ENCODE measurements at regions of chr13 and their contacts with region 1.

Region 1: DNA sequence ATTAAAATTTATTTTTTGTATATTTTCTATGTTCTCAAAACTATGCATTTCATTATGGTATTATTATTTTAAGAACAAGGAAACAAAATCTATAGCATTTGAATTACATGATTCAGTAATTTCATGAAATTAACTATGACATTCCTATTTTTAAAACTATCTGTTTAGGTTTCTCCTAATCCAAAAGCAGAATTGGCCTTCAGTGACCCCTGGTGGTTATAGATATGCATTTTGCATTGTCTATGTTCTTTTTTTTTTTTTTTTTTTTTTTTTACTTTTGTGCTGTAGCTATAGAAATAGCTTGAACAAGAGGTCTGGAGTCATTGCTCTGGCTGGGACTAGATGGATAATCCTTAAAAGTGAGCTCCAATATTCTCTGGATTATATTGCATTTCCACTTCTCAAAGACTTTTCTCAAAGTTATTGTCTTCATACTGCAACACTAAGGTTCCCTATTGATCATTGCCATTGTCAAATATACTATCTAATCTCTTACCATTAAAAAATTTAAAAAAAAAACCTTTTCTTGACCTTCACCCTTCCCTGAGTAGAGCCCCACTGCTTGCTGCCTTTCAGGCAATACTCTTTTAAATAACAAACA is 15.9 kb upstream of the DNAJC3 start:
- DNase-seq: peak in 1 of 5 donors; percentile 16
- ATAC-seq: no peak
- H3K4me3 ChIP-seq: no peak overlapping the region
- H3K27ac ChIP-seq: no peak overlapping the region
- H3K4me1 ChIP-seq: no peaks in the 10 kb centered on the region
- H3K27me3 ChIP-seq: peaks cover 0 to 7% (median 0%) of the 10 kb centered on the region in 9 donors
- CTCF ChIP-seq: peak; percentile 39 to 67 (median 52)
- POLR2A ChIP-seq: no peak

Region 2: GRCh38 chr13:95181586-95181985 is 479.5 kb before region 1 on chr13:
- intact Hi-C with region 1: loop called in 1 of 10 experiments (anchors 5 kb)
- DNase-seq: no peak
- ATAC-seq: no peak
- H3K4me3 ChIP-seq: no peak overlapping the region
- H3K27ac ChIP-seq: no peak overlapping the region
- H3K4me1 ChIP-seq: peaks cover 0 to 18% (median 8%) of the 10 kb centered on the region in 12 donors
- H3K27me3 ChIP-seq: no peaks in the 10 kb centered on the region
- CTCF ChIP-seq: no peak
- POLR2A ChIP-seq: no peak

Region 3: GRCh38 chr13:95509521-95510310 is 151.4 kb before region 1 on chr13:
- intact Hi-C with region 1: loop called in 1 of 10 experiments (anchors 10 kb)
- DNase-seq: no peak
- ATAC-seq: no peak
- H3K4me3 ChIP-seq: no peak overlapping the region
- H3K27ac ChIP-seq: no peak overlapping the region
- H3K4me1 ChIP-seq: peaks cover 0 to 8% (median 0%) of the 10 kb centered on the region in 12 donors
- H3K27me3 ChIP-seq: peaks cover 0 to 6% (median 0%) of the 10 kb centered on the region in 9 donors
- CTCF ChIP-seq: no peak
- POLR2A ChIP-seq: no peak

Region 4: DNA sequence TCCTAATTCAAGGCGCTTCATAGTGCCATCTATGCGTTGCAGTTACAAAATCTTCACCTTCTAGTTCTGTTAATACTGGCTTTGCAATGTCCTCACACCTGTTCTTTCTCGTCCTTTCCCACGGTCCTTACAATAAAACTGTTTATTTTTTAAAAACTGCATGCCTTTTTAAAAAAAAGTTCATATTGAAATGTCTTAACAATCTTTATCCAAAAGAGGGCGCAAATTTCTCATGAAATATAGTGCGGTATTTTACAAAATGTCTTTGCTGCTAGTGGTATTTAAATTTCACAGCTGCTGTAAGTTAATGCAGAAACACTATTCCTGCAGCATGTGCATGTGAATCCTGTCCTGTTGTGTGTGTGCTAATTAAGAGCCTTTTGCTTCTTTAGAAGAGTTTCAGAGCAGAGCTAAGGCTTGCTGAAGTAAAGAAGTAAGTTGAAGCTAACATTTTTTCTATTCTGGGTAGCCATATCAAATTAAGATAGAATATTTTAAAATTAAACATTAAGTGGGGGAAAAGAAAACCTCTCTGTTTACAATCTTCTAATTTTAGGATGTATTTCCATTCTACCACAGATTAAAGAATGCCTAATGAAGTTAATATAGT is 124.3 kb before region 1 on chr13:
- intact Hi-C with region 1: loop called in 6 of 10 experiments (anchors 5 to 10 kb)
- DNase-seq: no peak
- ATAC-seq: no peak
- H3K4me3 ChIP-seq: no peak overlapping the region
- H3K27ac ChIP-seq: no peak overlapping the region
- H3K4me1 ChIP-seq: peaks cover 0 to 13% (median 5%) of the 10 kb centered on the region in 12 donors
- H3K27me3 ChIP-seq: peaks cover 0 to 4% (median 0%) of the 10 kb centered on the region in 9 donors
- CTCF ChIP-seq: peak; percentile 18 to 59 (median 46)
- POLR2A ChIP-seq: no peak

Measured in heart left ventricle (tissue), 16 donors.